Cardiac septum (tissue), 1 donor: ENCODE measurements at regions of chr2 and their contacts with region 1.

Region 1: DNA sequence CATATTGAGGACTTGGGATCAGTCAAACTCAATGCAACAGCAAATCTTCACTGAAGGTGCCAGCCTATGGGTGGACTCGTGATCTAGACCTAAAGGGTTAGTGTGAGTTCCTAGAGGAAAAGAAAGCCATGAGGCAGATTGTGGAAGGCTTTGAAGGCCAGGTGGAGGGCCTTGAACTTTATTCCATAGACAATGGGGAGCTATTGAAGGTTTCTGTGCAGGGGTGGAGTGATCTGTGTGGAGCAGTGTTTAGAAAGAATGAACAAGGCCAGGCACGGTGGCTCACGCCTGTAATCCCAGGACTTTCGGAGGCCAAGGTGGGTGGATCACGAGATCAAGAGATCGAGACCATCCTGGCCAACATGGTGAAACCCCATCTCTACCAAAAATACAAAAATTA is 61.5 kb downstream of the EPAS1 start:
- DNase-seq: no peak

Region 2: GRCh38 chr2:46232860-46233259 is 125.9 kb before region 1 on chr2:
- intact Hi-C with region 1: loop called (anchors 2 kb)
- DNase-seq: no peak